Naive thymus-derived CD4-positive, alpha-beta T cell (primary cell): ENCODE measurements at regions of chr2 and their contacts with region 1.

Region 1: GRCh38 chr2:31333527-31334183 is 80.9 kb downstream of the XDH start:
- DNase-seq: peak; percentile 31 to 74 (median 67)
- ATAC-seq: peak; percentile 81
- H3K4me3 ChIP-seq: no peak overlapping the region
- H3K4me3 Mint-ChIP-seq: no peak overlapping the region
- H3K27ac ChIP-seq: no peak overlapping the region
- H3K27ac Mint-ChIP-seq: no peak overlapping the region
- H3K4me1 ChIP-seq: no peaks in the 10 kb centered on the region
- H3K4me1 Mint-ChIP-seq: no peaks in the 10 kb centered on the region
- H3K27me3 ChIP-seq: no peaks in the 10 kb centered on the region
- H3K27me3 Mint-ChIP-seq: peaks cover 0 to 26% (median 5%) of the 10 kb centered on the region in 5 donors

Region 2: GRCh38 chr2:30098266-30099005 is 1235.2 kb before region 1 on chr2:
- CTCF ChIA-PET with region 1: no interaction called
- POLR2A ChIA-PET with region 1: no interaction called
- intact Hi-C with region 1: loop called in 1 of 2 experiments (anchors 10 kb)
- DNase-seq: no peak
- ATAC-seq: no peak
- H3K4me3 ChIP-seq: no peak overlapping the region
- H3K4me3 Mint-ChIP-seq: no peak overlapping the region
- H3K27ac ChIP-seq: no peak overlapping the region
- H3K27ac Mint-ChIP-seq: no peak overlapping the region
- H3K4me1 ChIP-seq: no peaks in the 10 kb centered on the region
- H3K4me1 Mint-ChIP-seq: no peaks in the 10 kb centered on the region
- H3K27me3 ChIP-seq: no peaks in the 10 kb centered on the region
- H3K27me3 Mint-ChIP-seq: peaks cover 12 to 40% (median 23%) of the 10 kb centered on the region in 5 donors

Region 3: GRCh38 chr2:30862054-30862651 is 471.5 kb before region 1 on chr2:
- CTCF ChIA-PET with region 1: interaction called, 12 read pairs
- POLR2A ChIA-PET with region 1: no interaction called
- intact Hi-C with region 1: loop called (anchors 1 kb)
- DNase-seq: peak in 6 of 9 donors; percentile 2 to 40 (median 26)
- ATAC-seq: peak; percentile 73
- H3K4me3 ChIP-seq: no peak overlapping the region
- H3K4me3 Mint-ChIP-seq: no peak overlapping the region
- H3K27ac ChIP-seq: no peak overlapping the region
- H3K27ac Mint-ChIP-seq: no peak overlapping the region
- H3K4me1 ChIP-seq: no peaks in the 10 kb centered on the region
- H3K4me1 Mint-ChIP-seq: peaks cover 0 to 14% (median 2%) of the 10 kb centered on the region in 7 donors
- H3K27me3 ChIP-seq: no peaks in the 10 kb centered on the region
- H3K27me3 Mint-ChIP-seq: peaks cover 6 to 21% (median 11%) of the 10 kb centered on the region in 5 donors

Region 4: GRCh38 chr2:31170071-31170698 is 163.5 kb before region 1 on chr2:
- CTCF ChIA-PET with region 1: interaction called, 11 read pairs
- POLR2A ChIA-PET with region 1: no interaction called
- intact Hi-C with region 1: loop called (anchors 1 kb)
- DNase-seq: peak in 8 of 9 donors; percentile 3 to 49 (median 28)
- ATAC-seq: peak; percentile 78
- H3K4me3 ChIP-seq: no peak overlapping the region
- H3K4me3 Mint-ChIP-seq: no peak overlapping the region
- H3K27ac ChIP-seq: no peak overlapping the region
- H3K27ac Mint-ChIP-seq: peak overlapping the region in 1 of 9 donors; percentile 32
- H3K4me1 ChIP-seq: no peaks in the 10 kb centered on the region
- H3K4me1 Mint-ChIP-seq: peaks cover 0 to under 1% (median 0%) of the 10 kb centered on the region in 7 donors
- H3K27me3 ChIP-seq: no peaks in the 10 kb centered on the region
- H3K27me3 Mint-ChIP-seq: peaks cover 0 to 6% (median under 1%) of the 10 kb centered on the region in 5 donors

Region 5: DNA sequence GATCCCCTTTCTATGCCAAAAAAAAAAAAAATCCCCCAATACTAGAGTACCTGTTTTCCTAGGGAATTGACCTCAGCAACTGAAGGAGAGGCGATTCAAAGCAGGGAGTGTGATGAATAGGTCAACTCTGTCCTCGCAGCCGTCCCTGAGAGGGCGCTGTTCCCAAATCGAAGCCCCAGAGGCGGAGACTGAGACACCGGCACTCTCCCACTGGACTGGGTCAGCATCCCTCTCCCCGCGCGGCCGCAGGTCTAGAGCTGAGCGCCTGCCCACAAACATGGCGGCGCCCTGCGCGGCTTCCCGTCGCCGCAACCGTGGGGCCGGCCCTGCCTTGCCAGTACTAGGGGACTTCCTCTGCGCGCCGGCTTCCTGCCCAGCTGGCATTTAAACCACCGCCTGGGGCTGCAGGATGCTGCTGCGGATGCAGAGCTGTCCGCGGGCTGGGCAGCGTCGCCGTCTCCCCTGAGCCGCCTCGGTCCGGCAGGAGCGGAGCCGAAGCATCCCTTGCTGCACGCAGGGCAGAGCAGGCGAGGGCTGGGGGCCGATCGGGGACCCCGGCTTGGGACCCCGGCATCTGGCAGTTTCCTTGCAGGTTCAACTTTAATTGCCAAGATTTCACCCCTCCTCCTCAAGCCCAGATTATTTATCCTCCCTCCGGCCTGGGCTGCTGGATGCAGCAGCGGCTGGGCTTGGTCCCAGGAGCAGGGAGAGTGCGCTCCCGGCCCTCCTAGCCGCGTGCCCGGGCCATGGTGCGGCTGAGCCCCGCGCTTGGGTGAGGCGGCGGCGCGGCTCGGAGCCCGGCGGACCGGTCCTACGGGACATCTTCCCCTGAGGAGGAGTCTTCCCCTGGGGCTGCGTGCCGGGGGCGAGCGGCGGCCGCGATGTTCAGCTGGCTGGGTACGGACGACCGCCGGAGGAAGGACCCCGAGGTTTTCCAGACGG is 99.6 kb before region 1 on chr2 and contains the start of gene EHD3:
- CTCF ChIA-PET with region 1: no interaction called
- POLR2A ChIA-PET with region 1: no interaction called
- intact Hi-C with region 1: loop called in 1 of 2 experiments (anchors 2 kb)
- DNase-seq: peak; percentile 53 to 80 (median 67)
- ATAC-seq: peak; percentile 95
- H3K4me3 ChIP-seq: peak within 1 kb of the TSS; percentile 75
- H3K4me3 Mint-ChIP-seq: peak within 1 kb of the TSS; percentile 74 to 89 (median 83)
- H3K27ac ChIP-seq: peak within 1 kb of the TSS; percentile 32
- H3K27ac Mint-ChIP-seq: peak within 1 kb of the TSS; percentile 12 to 85 (median 72)
- H3K4me1 ChIP-seq: peaks cover 4 to 14% of the 10 kb centered on the region in 2 donors
- H3K4me1 Mint-ChIP-seq: peaks cover 8 to 33% (median 25%) of the 10 kb centered on the region in 7 donors
- H3K27me3 ChIP-seq: no peaks in the 10 kb centered on the region
- H3K27me3 Mint-ChIP-seq: peaks cover 0 to 22% (median 0%) of the 10 kb centered on the region in 5 donors
- total RNA-seq, gene EHD3: 1.6 to 4.5 (median 3.5) TPM